PC-9 (cell line): ENCODE measurements at regions of chr3 and their contacts with region 1.

Region 1: GRCh38 chr3:142568393-142569017 is 10.0 kb downstream of the ATR start:
- DNase-seq: no peak
- H3K4me3 ChIP-seq: no peak overlapping the region
- H3K27ac ChIP-seq: no peak overlapping the region
- H3K4me1 ChIP-seq: no peaks in the 10 kb centered on the region
- H3K27me3 ChIP-seq: no peaks in the 10 kb centered on the region
- CTCF ChIP-seq: no peak

Region 2: DNA sequence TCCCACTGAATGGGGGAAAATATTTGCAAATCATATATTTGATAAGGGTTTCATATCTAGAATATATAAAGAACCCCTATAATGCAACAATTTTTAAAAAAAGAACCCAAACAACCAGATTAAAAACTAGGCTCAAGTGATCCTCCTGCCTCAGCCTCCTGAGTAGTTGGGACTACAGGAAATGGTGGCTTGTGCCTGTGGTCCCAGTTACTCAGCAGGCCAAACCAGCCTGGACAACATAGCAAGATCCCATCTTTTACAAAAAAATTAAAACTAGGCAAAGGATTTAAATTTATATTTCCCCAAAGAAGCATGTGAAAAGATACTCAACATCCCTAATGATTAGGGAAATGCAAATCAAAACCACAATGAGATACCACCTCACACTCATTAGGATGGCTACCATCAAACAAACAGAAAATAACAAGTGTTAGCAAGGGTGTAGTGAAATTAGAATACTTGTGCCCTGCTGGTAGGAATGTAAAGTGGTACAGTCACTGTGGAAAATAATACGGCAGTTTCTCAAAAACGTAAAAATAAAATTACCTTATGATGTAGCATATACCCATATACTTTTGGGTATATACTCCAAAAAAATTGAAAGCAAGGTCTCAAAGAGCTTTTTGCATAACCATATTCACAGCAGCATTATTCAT is 438.9 kb before region 1 on chr3:
- CTCF ChIA-PET with region 1: no interaction called
- POLR2A ChIA-PET with region 1: no interaction called
- intact Hi-C with region 1: no loop called
- DNase-seq: no peak
- H3K4me3 ChIP-seq: no peak overlapping the region
- H3K27ac ChIP-seq: no peak overlapping the region
- H3K4me1 ChIP-seq: no peaks in the 10 kb centered on the region
- H3K27me3 ChIP-seq: no peaks in the 10 kb centered on the region
- CTCF ChIP-seq: 0 out of 2 replicates have a peak, but pooled peaks have one; percentile 38

Region 3: DNA sequence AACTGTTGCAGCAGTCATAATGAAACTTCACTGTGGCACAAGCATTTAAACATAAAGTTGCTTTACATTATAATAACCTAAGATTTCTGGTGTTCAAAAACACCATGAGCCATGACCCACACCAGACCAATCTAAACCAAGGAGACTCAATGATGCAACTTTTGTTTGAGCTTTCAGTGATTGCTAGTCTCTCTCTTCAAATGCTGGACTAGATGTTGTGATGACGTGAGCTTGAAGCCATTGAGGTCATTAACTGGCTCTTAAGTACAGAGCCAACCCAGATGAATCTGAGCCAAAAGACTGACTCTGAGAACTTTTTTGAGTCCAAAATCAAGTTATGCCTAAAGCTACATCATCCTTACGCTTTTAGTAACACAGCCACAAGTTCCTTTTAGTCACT is 26.5 kb before region 1 on chr3:
- CTCF ChIA-PET with region 1: no interaction called
- POLR2A ChIA-PET with region 1: interaction called, 13 read pairs
- intact Hi-C with region 1: no loop called
- DNase-seq: no peak
- H3K4me3 ChIP-seq: no peak overlapping the region
- H3K27ac ChIP-seq: 0 out of 2 replicates have a peak overlapping the region, but pooled peaks have one; percentile 1
- H3K4me1 ChIP-seq: no peaks in the 10 kb centered on the region
- H3K27me3 ChIP-seq: no peaks in the 10 kb centered on the region
- CTCF ChIP-seq: no peak

Region 4: GRCh38 chr3:142578327-142579223 is 10.1 kb after region 1 on chr3 and contains the start of gene ATR:
- CTCF ChIA-PET with region 1: no interaction called
- POLR2A ChIA-PET with region 1: interaction called, 28 read pairs
- intact Hi-C with region 1: no loop called
- DNase-seq: peak; percentile 89 to 98
- H3K4me3 ChIP-seq: peak within 1 kb of the TSS; percentile 98
- H3K27ac ChIP-seq: peak within 1 kb of the TSS; percentile 81
- H3K4me1 ChIP-seq: peaks cover 28% of the 10 kb centered on the region
- H3K27me3 ChIP-seq: no peaks in the 10 kb centered on the region
- CTCF ChIP-seq: no peak
- total RNA-seq, gene ATR: 28.3 and 33.3 TPM in 2 replicates